ENCODE measurements at regions of chrX and their contacts with region 1.

Region 1: DNA sequence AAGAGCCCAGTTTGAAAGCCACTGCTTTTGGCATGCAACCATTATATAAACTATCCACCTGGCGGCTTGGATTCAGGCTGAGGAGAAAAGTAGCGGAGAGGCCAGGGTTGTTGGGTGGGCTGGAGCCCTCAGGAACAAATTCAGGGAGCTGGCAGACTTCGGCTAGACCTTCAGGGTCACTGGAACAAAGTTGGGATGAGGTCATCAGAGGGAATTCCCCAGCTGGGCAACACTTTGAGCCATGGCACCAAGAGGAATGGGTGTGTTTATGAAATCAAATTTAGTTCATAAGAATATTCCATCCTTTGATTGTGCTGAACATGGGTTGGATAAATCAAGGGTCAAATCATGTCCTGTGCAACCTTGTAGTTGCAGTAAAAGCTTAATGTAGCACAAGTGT is 22.0 kb downstream of the MTMR1 start:
- DNase-seq: no peak
- ATAC-seq: no peak
- H3K4me3 Mint-ChIP-seq: no peak overlapping the region
- H3K27ac Mint-ChIP-seq: peak overlapping the region; percentile 35
- H3K4me1 Mint-ChIP-seq: peaks cover 42% of the 10 kb centered on the region
- H3K27me3 Mint-ChIP-seq: no peaks in the 10 kb centered on the region
- CTCF ChIP-seq: no peak

Region 2: GRCh38 chrX:149962859-149963757 is 752.1 kb before region 1 on chrX:
- CTCF ChIA-PET with region 1: no interaction called
- POLR2A ChIA-PET with region 1: no interaction called
- intact Hi-C with region 1: loop called (anchors 2 kb)
- DNase-seq: no peak
- ATAC-seq: peak; percentile 54
- H3K4me3 Mint-ChIP-seq: no peak overlapping the region
- H3K27ac Mint-ChIP-seq: no peak overlapping the region
- H3K4me1 Mint-ChIP-seq: no peaks in the 10 kb centered on the region
- H3K27me3 Mint-ChIP-seq: no peaks in the 10 kb centered on the region
- CTCF ChIP-seq: no peak

Region 3: DNA sequence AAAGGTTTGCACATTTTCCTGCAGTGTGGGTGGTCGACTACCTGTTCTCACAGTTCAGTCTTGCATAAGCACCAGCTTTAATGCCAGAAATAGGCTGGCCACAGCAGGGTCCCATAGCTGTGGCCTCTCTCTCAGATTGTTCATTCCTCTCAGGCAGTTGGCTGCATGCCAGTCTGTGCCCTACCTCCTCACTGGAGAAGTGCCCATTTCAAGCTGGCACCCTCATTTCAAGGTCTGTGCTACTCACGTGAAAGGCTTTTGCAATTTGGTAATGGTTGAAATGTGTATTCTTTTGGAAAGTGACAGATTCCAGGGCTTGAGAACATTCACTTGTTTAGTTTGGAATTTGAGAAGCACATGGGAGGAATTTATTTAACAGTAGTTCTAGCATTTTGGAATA is 50.9 kb before region 1 on chrX:
- CTCF ChIA-PET with region 1: no interaction called
- POLR2A ChIA-PET with region 1: no interaction called
- intact Hi-C with region 1: loop called (anchors 10 kb)
- DNase-seq: no peak
- ATAC-seq: no peak
- H3K4me3 Mint-ChIP-seq: no peak overlapping the region
- H3K27ac Mint-ChIP-seq: no peak overlapping the region
- H3K4me1 Mint-ChIP-seq: no peaks in the 10 kb centered on the region
- H3K27me3 Mint-ChIP-seq: no peaks in the 10 kb centered on the region
- CTCF ChIP-seq: no peak

Region 4: GRCh38 chrX:150683536-150684146 is 31.5 kb before region 1 on chrX:
- CTCF ChIA-PET with region 1: interaction called, 36 read pairs
- POLR2A ChIA-PET with region 1: interaction called, 4 read pairs
- intact Hi-C with region 1: loop called (anchors 1 kb)
- DNase-seq: no peak
- ATAC-seq: peak; percentile 18
- H3K4me3 Mint-ChIP-seq: no peak overlapping the region
- H3K27ac Mint-ChIP-seq: no peak overlapping the region
- H3K4me1 Mint-ChIP-seq: peaks cover 7% of the 10 kb centered on the region
- H3K27me3 Mint-ChIP-seq: no peaks in the 10 kb centered on the region
- CTCF ChIP-seq: no peak